BJ (cell line): ENCODE measurements at regions of chr15 and their contacts with region 1.

Region 1: GRCh38 chr15:43230640-43231115 is 9.9 kb upstream of the EPB42 start:
- DNase-seq: no peak
- H3K4me3 ChIP-seq: no peak overlapping the region
- H3K27me3 ChIP-seq: peaks cover 11% of the 10 kb centered on the region
- CTCF ChIP-seq: no peak

Region 2: DNA sequence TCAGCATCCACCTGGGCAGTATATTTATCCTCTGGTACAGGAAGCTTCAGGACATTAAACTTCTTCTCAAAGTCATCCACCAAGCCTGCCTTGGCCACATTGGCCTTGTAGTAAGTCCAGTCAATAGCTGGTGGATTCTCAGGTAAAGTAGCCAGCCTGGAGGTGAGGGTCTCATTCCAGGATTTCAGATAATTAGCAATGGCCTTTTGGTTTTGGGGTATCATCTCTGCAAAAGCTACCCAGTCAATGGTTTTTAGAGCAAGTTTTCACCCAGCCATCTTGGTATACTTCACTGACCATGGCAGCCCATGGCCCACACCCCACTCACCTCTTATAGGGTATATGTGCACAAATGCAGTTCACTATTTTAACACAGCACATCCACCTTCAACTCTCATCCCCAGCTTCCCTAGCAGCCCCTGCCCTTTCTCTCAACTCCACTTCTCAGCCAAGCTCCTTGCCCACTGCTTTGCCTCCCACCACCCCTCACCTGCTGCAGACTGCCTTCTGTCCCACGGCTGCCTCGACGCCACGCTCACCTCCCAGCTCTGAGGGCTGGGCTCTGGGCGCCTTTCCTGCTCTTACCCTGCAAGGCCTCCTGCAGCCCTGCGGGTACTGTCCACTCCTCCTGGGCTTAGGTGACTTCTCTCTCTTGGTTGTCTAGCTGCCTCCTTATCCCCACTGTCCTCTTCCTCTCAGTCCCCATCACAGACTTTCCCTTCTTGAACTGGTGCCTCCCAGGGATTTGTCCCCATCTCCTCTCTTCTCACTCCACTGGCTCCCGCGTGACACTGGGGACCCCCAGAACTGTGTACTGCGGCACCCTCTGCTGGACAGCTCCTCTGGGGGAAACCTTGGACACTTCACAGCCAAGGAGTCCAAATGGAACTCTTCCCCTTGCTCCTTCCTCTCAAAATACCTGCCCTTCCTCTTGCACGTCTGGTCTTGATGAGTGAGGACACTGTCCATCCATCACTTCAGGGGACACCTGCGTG is 37.7 kb after region 1 on chr15:
- CTCF ChIA-PET with region 1: interaction called, 58 read pairs
- POLR2A ChIA-PET with region 1: no interaction called
- DNase-seq: no peak
- H3K4me3 ChIP-seq: no peak overlapping the region
- H3K27me3 ChIP-seq: peaks cover 27% of the 10 kb centered on the region
- CTCF ChIP-seq: peak; percentile 26; the same call in 1 of the 2 replicates